Left ventricle myocardium inferior (tissue), 1 donor: ENCODE measurements at regions of chr1 and their contacts with region 1.

Region 1: DNA sequence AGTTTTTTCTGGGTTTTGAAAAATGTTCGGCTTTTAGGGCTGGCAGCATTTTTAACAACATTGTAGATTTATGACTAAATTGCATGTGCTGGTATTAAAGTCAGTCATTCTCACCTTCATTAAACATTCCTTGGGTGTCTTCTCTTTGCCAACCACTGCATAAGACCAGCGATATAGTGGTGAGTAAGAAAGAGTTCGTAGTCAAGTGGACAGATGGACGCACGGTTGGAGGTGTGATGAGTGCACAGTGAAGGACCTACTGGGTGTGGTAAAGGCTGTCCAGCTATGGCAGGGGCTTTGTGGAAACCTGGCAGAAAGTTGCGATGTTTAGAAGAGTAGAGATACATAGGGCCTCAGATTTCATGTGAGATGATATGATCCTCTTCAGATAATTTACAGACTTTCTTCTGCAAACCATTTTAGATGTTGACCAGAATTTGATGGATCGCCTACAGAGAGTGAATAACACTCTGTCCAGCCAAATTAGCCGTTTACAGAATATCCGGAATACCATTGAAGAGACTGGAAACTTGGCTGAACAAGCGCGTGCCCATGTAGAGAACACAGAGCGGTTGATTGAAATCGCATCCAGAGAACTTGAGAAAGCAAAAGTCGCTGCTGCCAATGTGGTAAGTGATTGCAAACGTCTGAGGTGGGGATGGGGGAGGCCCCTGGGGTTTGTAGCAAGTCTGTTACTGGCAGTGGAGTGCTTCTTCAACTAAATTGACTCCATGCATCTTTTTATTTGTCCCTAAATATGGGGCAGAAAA is 56.0 kb upstream of the LAMC2 start:
- DNase-seq: no peak
- H3K4me3 ChIP-seq: no peak overlapping the region
- H3K27ac ChIP-seq: peak overlapping the region; percentile 35
- H3K4me1 ChIP-seq: peaks cover 22% of the 10 kb centered on the region
- H3K27me3 ChIP-seq: no peaks in the 10 kb centered on the region
- CTCF ChIP-seq: no peak

Region 2: GRCh38 chr1:182884872-182885271 is 245.2 kb before region 1 on chr1:
- intact Hi-C with region 1: loop called (anchors 5 kb)
- DNase-seq: no peak
- H3K4me3 ChIP-seq: no peak overlapping the region
- H3K27ac ChIP-seq: no peak overlapping the region
- H3K4me1 ChIP-seq: no peaks in the 10 kb centered on the region
- H3K27me3 ChIP-seq: no peaks in the 10 kb centered on the region
- CTCF ChIP-seq: no peak

Region 3: DNA sequence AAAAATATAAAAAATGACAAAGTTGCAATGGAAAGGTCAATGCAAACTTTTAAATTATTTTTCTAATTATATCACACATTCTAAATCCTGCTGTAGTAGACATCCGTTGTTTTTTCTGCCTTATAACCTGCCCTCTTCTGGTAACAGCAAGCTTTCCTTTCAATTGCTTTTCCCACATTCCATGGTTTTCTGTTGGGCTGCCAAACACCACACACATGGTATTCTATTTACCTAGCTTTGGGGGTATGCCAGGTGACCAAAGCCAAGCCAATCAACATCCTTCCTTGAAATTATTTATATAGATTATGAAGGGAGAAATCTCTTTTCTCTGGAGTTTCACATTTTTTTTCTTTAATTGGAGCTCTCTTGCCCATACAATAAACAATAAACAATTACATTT is 110.2 kb before region 1 on chr1:
- intact Hi-C with region 1: no loop called
- DNase-seq: no peak
- H3K4me3 ChIP-seq: no peak overlapping the region
- H3K27ac ChIP-seq: peak overlapping the region; percentile 5
- H3K4me1 ChIP-seq: peaks cover 40% of the 10 kb centered on the region
- H3K27me3 ChIP-seq: no peaks in the 10 kb centered on the region
- CTCF ChIP-seq: peak; percentile 37